Activated CD4-positive, alpha-beta T cell treated with anti-CD3 and anti-CD28 coated beads, Interleukin-2, amount 10 ng/mL, durations not matched to agents 7 days and 5 days (primary cell): ENCODE measurements at regions of chr16 and their contacts with region 1.

Region 1: DNA sequence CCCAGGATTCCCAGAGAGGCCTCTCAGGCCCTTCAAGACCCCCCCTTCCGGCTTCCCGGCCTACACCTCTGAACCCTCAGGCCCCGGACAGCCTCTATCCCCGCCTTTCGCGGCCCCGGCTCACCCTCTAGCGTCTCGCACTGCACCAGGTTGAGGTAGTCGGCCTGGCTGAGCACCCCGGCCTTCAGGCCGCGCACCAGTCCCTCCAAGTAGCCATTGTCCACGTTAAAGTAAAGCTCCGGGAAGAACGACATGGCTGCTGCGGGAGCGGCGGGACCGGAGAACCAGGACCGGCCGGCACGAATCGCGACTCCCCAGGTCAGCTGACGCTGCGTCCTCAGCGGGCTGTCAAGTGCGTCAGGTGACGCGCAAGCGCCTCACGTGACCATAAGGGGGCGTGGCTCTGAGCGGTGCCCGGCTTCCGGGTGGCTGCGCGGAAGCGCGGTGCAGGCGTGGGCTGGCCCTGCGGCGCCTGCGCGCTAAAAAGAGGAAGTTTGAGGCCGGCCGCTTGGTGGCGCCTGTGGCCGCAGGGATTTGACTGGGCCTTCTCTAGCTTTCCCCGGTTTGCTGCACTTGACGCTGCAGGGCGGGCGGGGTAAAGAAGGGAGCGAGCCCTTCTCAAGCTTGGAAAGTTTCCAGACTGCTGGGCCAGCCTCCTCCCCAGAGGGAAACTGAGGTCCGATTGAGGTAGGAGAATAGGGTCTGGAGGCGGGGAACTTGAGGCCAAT is at the start of gene ATP6V0D1:
- DNase-seq: peak; percentile 99
- H3K4me3 Mint-ChIP-seq: peak within 1 kb of the TSS; percentile 90
- H3K27ac Mint-ChIP-seq: peak within 1 kb of the TSS; percentile 97
- H3K4me1 Mint-ChIP-seq: peaks cover 26% of the 10 kb centered on the region
- H3K27me3 Mint-ChIP-seq: no peaks in the 10 kb centered on the region
- total RNA-seq, gene ATP6V0D1: 52.1 to 60.3 TPM

Region 2: DNA sequence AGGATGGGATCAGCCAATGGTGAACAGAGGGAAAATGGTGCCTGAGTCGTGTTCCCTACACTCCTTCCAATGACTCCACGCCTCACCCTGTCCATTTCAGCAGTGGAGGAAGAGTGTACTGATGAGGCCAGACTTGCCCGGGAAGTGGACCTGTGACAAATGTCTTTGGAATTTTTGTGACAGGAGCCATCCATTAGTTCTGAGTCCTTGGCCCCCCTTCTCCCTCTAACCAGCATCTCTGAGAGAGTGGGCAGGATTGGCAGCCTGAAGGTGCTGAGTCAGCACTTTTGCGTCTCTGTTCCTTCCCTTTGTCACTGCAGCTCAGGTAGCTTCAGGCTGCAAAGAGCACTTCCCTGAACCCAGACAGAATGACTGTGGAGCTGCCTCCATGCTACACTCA is 1023.1 kb before region 1 on chr16:
- CTCF ChIA-PET with region 1: no interaction called
- POLR2A ChIA-PET with region 1: no interaction called
- DNase-seq: no peak
- H3K4me3 Mint-ChIP-seq: no peak overlapping the region
- H3K27ac Mint-ChIP-seq: no peak overlapping the region
- H3K4me1 Mint-ChIP-seq: peaks cover 7% of the 10 kb centered on the region
- H3K27me3 Mint-ChIP-seq: peaks cover 26% of the 10 kb centered on the region

Region 3: GRCh38 chr16:67399181-67399733 is 81.7 kb before region 1 on chr16:
- CTCF ChIA-PET with region 1: no interaction called
- POLR2A ChIA-PET with region 1: no interaction called
- DNase-seq: peak; percentile 40
- H3K4me3 Mint-ChIP-seq: no peak overlapping the region
- H3K27ac Mint-ChIP-seq: no peak overlapping the region
- H3K4me1 Mint-ChIP-seq: no peaks in the 10 kb centered on the region
- H3K27me3 Mint-ChIP-seq: peaks cover 20% of the 10 kb centered on the region

Region 4: GRCh38 chr16:67461600-67462592 is 19.1 kb before region 1 on chr16:
- CTCF ChIA-PET with region 1: interaction called, 27 read pairs
- POLR2A ChIA-PET with region 1: no interaction called
- DNase-seq: no peak
- H3K4me3 Mint-ChIP-seq: no peak overlapping the region
- H3K27ac Mint-ChIP-seq: no peak overlapping the region
- H3K4me1 Mint-ChIP-seq: peaks cover 8% of the 10 kb centered on the region
- H3K27me3 Mint-ChIP-seq: no peaks in the 10 kb centered on the region

Region 5: DNA sequence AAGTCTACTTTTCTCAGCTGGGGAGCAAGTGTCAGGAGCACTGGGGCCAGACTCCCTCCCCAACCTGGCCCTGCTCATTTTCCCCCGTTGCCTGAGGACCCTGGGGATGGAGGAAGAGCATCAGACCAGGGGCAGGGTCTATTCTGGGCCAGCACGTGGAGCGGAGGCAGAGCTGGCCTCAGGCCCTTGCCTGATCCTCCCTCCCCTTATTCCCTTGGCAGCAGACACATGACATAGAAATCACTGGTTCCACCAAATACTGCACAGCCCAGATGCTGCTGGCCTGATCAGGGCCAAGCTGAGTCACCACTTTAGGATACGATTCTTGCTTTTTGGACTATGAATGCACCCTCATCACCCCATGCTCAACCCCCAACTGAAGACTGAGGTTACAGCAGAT is 18.1 kb after region 1 on chr16:
- CTCF ChIA-PET with region 1: interaction called, 11 read pairs
- POLR2A ChIA-PET with region 1: no interaction called
- DNase-seq: no peak
- H3K4me3 Mint-ChIP-seq: no peak overlapping the region
- H3K27ac Mint-ChIP-seq: no peak overlapping the region
- H3K4me1 Mint-ChIP-seq: peaks cover 22% of the 10 kb centered on the region
- H3K27me3 Mint-ChIP-seq: no peaks in the 10 kb centered on the region